ENCODE measurements at regions of chr14 and their contacts with region 1.

Region 1: DNA sequence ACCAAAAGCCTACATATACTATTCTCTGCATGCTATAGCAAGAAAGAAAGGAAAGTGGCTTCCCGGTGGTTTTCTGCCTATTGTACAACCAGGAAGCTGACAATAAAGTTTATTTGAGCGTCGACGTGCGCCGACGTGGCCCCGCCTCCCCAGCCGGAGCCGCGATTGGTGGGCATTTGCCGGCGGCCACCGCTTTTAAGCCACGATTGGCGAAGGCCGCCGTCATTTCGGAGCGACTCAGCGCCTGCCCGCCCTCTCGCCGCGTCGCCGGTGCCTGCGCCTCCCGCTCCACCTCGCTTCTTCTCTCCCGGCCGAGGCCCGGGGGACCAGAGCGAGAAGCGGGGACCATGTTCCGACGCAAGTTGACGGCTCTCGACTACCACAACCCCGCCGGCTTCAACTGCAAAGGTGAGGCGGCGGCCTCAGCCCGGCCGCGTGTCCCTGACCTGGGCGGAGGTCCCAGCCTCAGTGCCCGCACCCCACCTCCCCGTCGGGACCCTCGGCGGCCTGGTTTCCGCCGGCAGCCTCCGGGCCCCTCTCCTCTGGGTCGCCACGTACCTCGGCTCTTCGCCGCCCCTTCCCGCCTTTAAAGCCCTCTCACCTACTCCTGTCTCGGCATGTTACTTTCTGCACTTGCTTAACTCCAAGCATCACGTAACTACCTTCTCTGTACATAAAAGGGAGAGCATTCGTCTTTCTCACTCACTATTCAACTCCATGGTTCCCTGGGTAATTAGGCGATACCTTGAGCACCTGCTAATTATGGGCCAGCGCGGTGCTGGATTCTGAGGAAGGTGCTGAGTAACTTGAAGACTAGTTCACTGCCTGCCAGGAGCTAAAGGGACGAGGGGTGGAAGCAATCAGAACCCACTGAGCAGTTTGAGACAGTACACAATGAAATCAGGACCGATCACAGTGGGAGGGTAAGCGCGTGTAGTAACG is at the start of gene RTRAF:
- DNase-seq: peak; percentile 96
- H3K4me3 ChIP-seq: peak within 1 kb of the TSS; percentile 87 to 97 (median 90)
- H3K27ac ChIP-seq: peak within 1 kb of the TSS; percentile 90 to 94 (median 94)
- H3K4me1 ChIP-seq: peaks cover 8 to 20% (median 13%) of the 10 kb centered on the region in 4 donors
- H3K27me3 ChIP-seq: no peaks in the 10 kb centered on the region
- CTCF ChIP-seq: no peak
- EP300 ChIP-seq: no peak
- POLR2A ChIP-seq: peak; percentile 91
- total RNA-seq, gene RTRAF: 28.1 to 92.8 (median 51.5) TPM

Region 2: DNA sequence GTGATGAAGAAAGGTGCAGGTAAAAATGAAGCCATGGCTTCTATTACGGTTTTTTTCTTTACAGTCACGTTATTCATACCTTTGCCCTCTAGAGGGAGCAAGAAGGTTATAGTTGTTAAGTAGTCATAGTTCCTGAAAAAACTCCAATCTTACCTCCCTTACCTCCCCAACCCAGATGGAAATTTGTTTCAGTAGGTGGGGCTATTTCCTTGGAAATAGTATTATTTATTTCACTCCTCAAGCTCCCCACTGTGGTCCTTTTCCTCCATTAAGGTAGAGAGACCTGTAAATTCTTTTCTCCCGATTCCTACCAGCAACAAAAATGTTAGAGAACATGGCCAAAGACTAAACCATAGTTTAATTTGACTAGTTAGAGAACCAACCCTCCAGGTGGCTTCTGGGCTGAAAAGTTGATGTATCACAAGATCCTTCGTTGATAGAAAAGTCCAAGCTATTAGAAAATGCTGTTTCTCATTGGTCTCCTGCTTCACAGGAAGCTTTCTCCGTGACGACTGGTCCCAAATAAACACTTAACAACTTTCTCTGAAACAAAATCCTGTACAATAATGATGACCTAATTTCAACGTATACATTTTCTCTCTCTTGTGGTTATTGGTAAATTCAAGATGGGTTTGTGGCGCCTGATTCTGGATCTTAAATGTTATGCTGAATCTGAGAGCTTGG is 706.0 kb before region 1 on chr14:
- in situ Hi-C with region 1: loop called in 2 of 4 experiments (anchors 25 kb)
- intact Hi-C with region 1: no loop called
- DNase-seq: no peak
- H3K4me3 ChIP-seq: no peak overlapping the region
- H3K27ac ChIP-seq: no peak overlapping the region
- H3K4me1 ChIP-seq: peaks cover 0 to 5% (median 0%) of the 10 kb centered on the region in 4 donors
- H3K27me3 ChIP-seq: no peaks in the 10 kb centered on the region
- CTCF ChIP-seq: peak; percentile 70 to 86 (median 73)
- EP300 ChIP-seq: no peak
- POLR2A ChIP-seq: no peak

Region 3: DNA sequence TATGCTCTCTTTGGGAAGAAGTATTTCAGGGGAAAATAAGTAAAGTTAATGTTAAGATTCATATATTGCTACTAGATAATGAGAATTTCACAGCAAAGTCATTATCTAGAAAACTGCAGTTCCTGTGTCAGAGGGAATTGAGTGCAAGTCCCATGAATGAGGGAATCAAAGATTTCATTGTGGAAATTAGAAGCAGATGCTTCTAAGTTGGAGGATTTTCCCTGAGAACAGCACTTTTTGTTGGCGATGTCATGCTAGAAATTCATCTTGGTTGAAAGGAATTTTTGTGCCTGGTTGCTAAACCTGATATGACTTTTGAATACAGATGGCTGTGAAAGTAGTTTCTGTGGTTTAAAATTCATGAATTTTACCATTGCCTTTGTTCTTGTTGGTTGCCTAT is 312.3 kb before region 1 on chr14:
- in situ Hi-C with region 1: no loop called
- intact Hi-C with region 1: no loop called
- DNase-seq: no peak
- H3K4me3 ChIP-seq: no peak overlapping the region
- H3K27ac ChIP-seq: no peak overlapping the region
- H3K4me1 ChIP-seq: peaks cover 0 to 25% (median 6%) of the 10 kb centered on the region in 4 donors
- H3K27me3 ChIP-seq: no peaks in the 10 kb centered on the region
- CTCF ChIP-seq: no peak
- EP300 ChIP-seq: no peak
- POLR2A ChIP-seq: no peak

Region 4: DNA sequence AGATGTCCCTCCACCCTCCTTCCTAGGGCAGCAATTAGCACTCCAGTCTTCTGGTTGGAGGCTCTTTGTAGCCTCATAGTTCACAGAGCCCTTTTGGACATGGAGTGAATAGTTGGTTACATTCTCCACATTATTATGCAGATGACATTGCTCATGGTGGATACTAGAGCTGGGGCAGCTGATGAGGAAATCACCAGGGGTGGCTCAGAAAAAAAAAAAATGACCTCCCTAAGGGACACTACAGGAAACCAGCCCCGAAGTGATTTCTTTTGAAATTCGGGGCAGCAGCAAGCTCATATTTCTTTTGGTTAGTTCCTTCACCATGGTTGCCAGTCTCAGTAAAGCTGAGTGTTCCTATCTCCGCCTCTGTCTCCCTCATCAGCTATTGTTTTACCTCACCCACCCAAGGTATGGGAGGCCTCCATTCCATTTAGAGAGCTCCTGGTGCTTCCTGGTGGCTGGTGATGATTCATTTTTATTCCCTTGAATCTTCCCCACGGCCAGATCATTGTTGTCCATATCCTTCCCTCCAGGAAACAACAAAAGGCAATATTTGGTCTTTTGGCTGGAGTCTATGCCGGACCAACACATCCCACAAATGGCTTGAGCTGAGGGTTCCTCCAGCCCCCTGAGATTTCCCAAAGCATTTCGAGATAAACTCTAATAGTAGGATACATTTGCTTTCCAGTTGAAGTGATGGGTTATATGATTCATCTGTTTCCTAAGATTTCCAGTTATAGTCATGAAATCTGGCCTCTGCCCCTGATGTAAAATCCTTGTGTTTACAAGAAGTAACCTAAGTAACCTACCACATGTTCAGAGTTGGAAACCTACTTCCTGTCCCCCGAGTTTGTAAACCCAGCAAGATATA is 135.5 kb after region 1 on chr14:
- in situ Hi-C with region 1: loop called in 2 of 4 experiments (anchors 5 to 10 kb)
- intact Hi-C with region 1: loop called (anchors 1 kb)
- DNase-seq: no peak
- H3K4me3 ChIP-seq: no peak overlapping the region
- H3K27ac ChIP-seq: peak overlapping the region in 2 of 4 donors; percentile 7 to 44
- H3K4me1 ChIP-seq: peaks cover 0 to 17% (median 0%) of the 10 kb centered on the region in 4 donors
- H3K27me3 ChIP-seq: no peaks in the 10 kb centered on the region
- CTCF ChIP-seq: no peak
- EP300 ChIP-seq: no peak
- POLR2A ChIP-seq: no peak

Region 5: GRCh38 chr14:52131640-52132320 is 142.2 kb after region 1 on chr14:
- in situ Hi-C with region 1: loop called in 2 of 4 experiments (anchors 5 to 10 kb)
- intact Hi-C with region 1: no loop called
- DNase-seq: peak; percentile 84
- H3K4me3 ChIP-seq: no peak overlapping the region
- H3K27ac ChIP-seq: peak overlapping the region in 1 of 4 donors; percentile 14
- H3K4me1 ChIP-seq: peaks cover 0 to 14% (median 6%) of the 10 kb centered on the region in 4 donors
- H3K27me3 ChIP-seq: no peaks in the 10 kb centered on the region
- CTCF ChIP-seq: peak; percentile 64 to 82 (median 69)
- EP300 ChIP-seq: no peak
- POLR2A ChIP-seq: no peak

Region 6: GRCh38 chr14:52272375-52272774 is 282.8 kb after region 1 on chr14:
- in situ Hi-C with region 1: loop called in 2 of 4 experiments (anchors 10 to 25 kb)
- intact Hi-C with region 1: no loop called
- DNase-seq: peak; percentile 48
- H3K4me3 ChIP-seq: peak overlapping the region in 1 of 4 donors; percentile 6
- H3K27ac ChIP-seq: peak overlapping the region in 1 of 4 donors; percentile 21
- H3K4me1 ChIP-seq: peaks cover 0 to 22% (median 9%) of the 10 kb centered on the region in 4 donors
- H3K27me3 ChIP-seq: peaks cover 18% of the 10 kb centered on the region
- CTCF ChIP-seq: peak; percentile 26 to 53 (median 41)
- EP300 ChIP-seq: no peak
- POLR2A ChIP-seq: no peak

Region 7: DNA sequence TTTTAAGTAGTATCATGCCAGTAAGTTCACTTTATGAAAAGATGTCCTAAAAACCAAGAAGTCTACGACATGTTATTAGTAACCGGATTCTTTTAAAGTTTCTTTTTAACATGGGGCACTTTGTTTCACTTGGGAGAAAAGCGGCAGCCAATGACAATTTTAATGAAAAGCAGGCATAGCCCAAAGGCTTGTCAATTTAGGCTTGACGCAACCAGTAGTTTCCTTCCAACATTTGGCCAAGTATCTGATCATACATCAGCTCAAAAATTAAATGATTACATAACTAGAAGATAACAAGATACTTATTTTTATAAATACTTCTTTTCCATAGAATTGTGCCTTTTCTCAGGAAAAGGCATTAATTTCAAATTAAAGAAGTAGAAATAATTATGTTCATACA is 449.9 kb after region 1 on chr14:
- in situ Hi-C with region 1: no loop called
- intact Hi-C with region 1: no loop called
- DNase-seq: no peak
- H3K4me3 ChIP-seq: no peak overlapping the region
- H3K27ac ChIP-seq: no peak overlapping the region
- H3K4me1 ChIP-seq: no peaks in the 10 kb centered on the region
- H3K27me3 ChIP-seq: no peaks in the 10 kb centered on the region
- CTCF ChIP-seq: no peak
- EP300 ChIP-seq: no peak
- POLR2A ChIP-seq: no peak